Panc1 (cell line): ENCODE measurements at regions of chr3 and their contacts with region 1.

Region 1: GRCh38 chr3:81643721-81644120 is 117.7 kb downstream of the GBE1 start:
- DNase-seq: no peak
- ATAC-seq: no peak
- H3K4me3 ChIP-seq: no peak overlapping the region
- H3K27ac ChIP-seq: no peak overlapping the region
- H3K4me1 ChIP-seq: no peaks in the 10 kb centered on the region
- H3K27me3 ChIP-seq: no peaks in the 10 kb centered on the region
- CTCF ChIP-seq: peak; percentile 33; the same call in 1 of the 2 replicates

Region 2: DNA sequence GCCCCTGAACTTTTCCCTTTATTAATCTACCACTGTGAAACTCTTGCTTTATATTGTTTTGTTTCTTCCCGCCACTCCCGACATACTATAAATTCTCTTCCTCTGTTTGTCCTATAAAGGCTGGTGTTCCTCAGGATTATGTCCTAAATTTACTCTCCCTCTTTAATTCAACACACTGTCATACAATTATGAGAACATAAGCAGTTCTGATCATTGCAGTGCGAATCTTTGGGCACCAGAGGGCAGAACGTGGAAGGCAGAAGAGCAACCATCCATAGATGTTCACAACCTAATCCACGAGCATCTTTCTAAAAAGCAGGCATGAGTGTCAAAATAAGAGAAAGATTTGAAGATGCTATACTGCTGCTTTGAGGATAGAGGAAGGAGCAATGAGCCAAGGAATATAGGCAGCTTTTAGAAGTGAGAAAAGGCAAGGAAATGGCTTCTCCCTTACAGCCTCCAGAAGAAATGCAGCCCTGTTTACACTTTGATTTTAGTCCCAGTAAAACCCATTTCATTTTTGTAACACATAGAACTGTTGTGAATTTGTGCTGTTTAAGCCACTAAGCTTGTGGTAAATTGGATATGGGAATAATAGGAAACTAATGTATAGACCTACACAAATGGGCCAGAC is 61.6 kb before region 1 on chr3:
- CTCF ChIA-PET with region 1: no interaction called
- POLR2A ChIA-PET with region 1: no interaction called
- in situ Hi-C with region 1: no loop called
- intact Hi-C with region 1: loop called (anchors 5 kb)
- DNase-seq: peak; percentile 24
- ATAC-seq: peak; percentile 58; the same call in 1 of the 2 replicates
- H3K4me3 ChIP-seq: no peak overlapping the region
- H3K27ac ChIP-seq: no peak overlapping the region
- H3K4me1 ChIP-seq: no peaks in the 10 kb centered on the region
- H3K27me3 ChIP-seq: no peaks in the 10 kb centered on the region
- CTCF ChIP-seq: peak; percentile 75

Region 3: DNA sequence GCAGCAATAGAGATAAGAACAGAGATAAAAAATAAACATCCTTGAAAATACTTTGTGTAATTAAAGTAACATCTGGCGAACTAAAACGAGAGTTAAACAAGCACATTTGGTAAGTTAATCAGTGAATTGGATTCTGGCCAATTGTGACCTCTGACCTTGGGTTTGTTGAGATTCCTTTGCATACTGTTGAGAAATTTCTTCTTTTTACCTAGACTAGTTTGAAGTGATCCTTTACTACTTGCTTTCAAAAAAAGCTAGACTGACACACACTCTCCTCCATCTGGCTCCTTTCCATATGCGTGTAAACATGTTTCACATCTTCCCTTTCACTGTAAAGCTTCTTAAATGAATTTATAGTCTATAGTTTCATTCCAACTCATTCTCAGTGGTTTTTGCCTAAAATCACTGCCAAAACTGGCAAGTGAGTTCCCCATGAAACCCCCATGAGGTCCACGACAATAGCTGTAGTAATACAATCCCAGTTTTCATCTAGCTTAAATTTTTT is 135.0 kb after region 1 on chr3:
- CTCF ChIA-PET with region 1: no interaction called
- POLR2A ChIA-PET with region 1: no interaction called
- in situ Hi-C with region 1: no loop called
- intact Hi-C with region 1: no loop called
- DNase-seq: no peak
- ATAC-seq: no peak
- H3K4me3 ChIP-seq: no peak overlapping the region
- H3K27ac ChIP-seq: no peak overlapping the region
- H3K4me1 ChIP-seq: no peaks in the 10 kb centered on the region
- H3K27me3 ChIP-seq: no peaks in the 10 kb centered on the region
- CTCF ChIP-seq: no peak

Region 4: DNA sequence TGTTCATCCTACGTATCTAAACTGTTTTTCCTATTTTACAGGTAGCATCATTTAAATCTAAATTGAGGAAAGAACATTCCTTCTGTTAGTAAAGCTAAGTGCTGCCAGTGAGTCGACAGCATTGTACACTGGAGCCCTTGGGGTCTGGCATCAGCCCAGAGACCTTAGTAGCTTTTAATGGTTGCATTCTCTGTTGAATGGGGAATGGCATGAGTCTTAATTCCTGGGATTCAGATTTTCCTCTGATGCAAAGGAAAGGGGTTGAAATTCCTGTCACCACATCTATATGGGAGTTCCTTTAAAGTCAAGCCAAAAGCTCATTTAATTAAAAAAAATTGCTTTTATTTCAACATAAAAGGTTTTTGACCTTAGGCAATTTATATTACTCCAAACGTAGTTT is 266.1 kb after region 1 on chr3:
- CTCF ChIA-PET with region 1: no interaction called
- POLR2A ChIA-PET with region 1: interaction called, 12 read pairs
- in situ Hi-C with region 1: no loop called
- intact Hi-C with region 1: no loop called
- DNase-seq: no peak
- ATAC-seq: no peak
- H3K4me3 ChIP-seq: no peak overlapping the region
- H3K27ac ChIP-seq: no peak overlapping the region
- H3K4me1 ChIP-seq: no peaks in the 10 kb centered on the region
- H3K27me3 ChIP-seq: no peaks in the 10 kb centered on the region
- CTCF ChIP-seq: no peak